ENCODE measurements at regions of chr5 and their contacts with region 1.

Region 1: GRCh38 chr5:418681-419121 is 24.3 kb upstream of the EXOC3 start:
- DNase-seq: no peak
- ATAC-seq: no peak
- H3K4me3 ChIP-seq: no peak overlapping the region
- H3K27ac ChIP-seq: no peak overlapping the region
- H3K4me1 ChIP-seq: peaks cover 11 to 12% of the 10 kb centered on the region in 2 experiments; a peak in 3 of 4 replicates
- H3K27me3 ChIP-seq: no peaks in the 10 kb centered on the region
- CTCF ChIP-seq: no peak
- POLR2A ChIP-seq: no peak
- RAD21 ChIP-seq: no peak

Region 2: GRCh38 chr5:402615-403359 is 15.9 kb before region 1 on chr5:
- CTCF ChIA-PET with region 1: interaction called, 18 read pairs
- POLR2A ChIA-PET with region 1: interaction called, 3 read pairs
- RAD21 ChIA-PET with region 1: no interaction called
- intact Hi-C with region 1: no loop called
- DNase-seq: no peak
- ATAC-seq: no peak
- H3K4me3 ChIP-seq: no peak overlapping the region
- H3K27ac ChIP-seq: no peak overlapping the region
- H3K4me1 ChIP-seq: peaks cover 17 to 54% of the 10 kb centered on the region in 2 experiments
- H3K27me3 ChIP-seq: no peaks in the 10 kb centered on the region
- CTCF ChIP-seq: no peak
- POLR2A ChIP-seq: no peak
- RAD21 ChIP-seq: no peak

Region 3: DNA sequence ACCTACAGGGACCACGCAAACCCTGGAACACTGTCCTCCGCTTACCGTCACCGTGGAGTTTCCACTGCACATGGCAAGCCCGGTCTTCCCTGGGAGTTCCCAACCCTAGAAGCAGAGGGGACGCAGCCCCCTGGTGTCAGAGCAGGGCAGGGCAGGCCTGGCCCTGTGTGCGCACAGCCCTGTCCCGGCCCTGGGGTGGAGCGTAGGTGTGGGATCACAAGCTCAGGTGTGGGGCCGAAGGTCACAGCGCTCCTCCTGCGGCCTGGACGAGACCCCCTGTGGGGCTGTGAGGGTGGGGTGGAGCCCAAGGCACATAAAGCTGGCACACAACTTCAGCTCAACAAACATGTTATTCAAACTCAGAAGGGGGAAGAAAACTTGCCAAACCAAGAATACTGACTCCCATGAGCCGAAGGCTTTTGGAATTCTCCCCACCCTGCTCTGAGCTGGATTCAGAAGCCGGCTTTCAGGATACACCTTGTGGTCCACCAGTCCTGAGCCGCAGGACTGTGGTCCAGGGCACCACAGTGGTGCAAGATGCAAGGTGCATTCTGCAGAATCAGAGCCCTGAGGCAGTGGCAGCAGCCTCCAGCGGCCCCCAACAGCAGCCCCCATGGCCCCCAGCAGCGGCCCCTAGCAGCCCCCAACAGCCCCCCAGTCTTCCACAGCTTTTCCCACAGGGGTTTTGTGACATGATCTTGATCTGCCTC is 12.5 kb after region 1 on chr5:
- CTCF ChIA-PET with region 1: interaction called, 12 read pairs
- POLR2A ChIA-PET with region 1: no interaction called
- RAD21 ChIA-PET with region 1: no interaction called
- intact Hi-C with region 1: no loop called
- DNase-seq: peak; percentile 23
- ATAC-seq: peak; percentile 99
- H3K4me3 ChIP-seq: no peak overlapping the region
- H3K27ac ChIP-seq: no peak overlapping the region
- H3K4me1 ChIP-seq: peaks cover 0 to 14% of the 10 kb centered on the region in 2 experiments; a peak in 1 of 4 replicates
- H3K27me3 ChIP-seq: no peaks in the 10 kb centered on the region
- CTCF ChIP-seq: peak; percentile 80 to 91 (median 82)
- POLR2A ChIP-seq: no peak
- RAD21 ChIP-seq: peak; percentile 88

Region 4: GRCh38 chr5:1161833-1162229 is 743.1 kb after region 1 on chr5:
- CTCF ChIA-PET with region 1: no interaction called
- POLR2A ChIA-PET with region 1: no interaction called
- RAD21 ChIA-PET with region 1: no interaction called
- intact Hi-C with region 1: no loop called
- DNase-seq: no peak
- ATAC-seq: 0 out of 2 replicates have a peak, but pooled peaks have one; percentile 15
- H3K4me3 ChIP-seq: no peak overlapping the region
- H3K27ac ChIP-seq: peak overlapping the region; percentile 54; the same call in 1 of the 2 replicates
- H3K4me1 ChIP-seq: peaks cover 14 to 22% of the 10 kb centered on the region in 2 experiments
- H3K27me3 ChIP-seq: no peaks in the 10 kb centered on the region
- CTCF ChIP-seq: no peak
- POLR2A ChIP-seq: no peak
- RAD21 ChIP-seq: no peak

Measured in HCT116 (cell line).